ENCODE measurements at regions of chr1 and their contacts with region 1.

Region 1: GRCh38 chr1:156461781-156462647 is 38.6 kb downstream of the MEF2D start:
- DNase-seq: no peak
- H3K4me3 ChIP-seq: no peak overlapping the region
- H3K27ac ChIP-seq: no peak overlapping the region
- H3K4me1 ChIP-seq: peaks cover 23 to 34% of the 10 kb centered on the region in 2 donors
- H3K27me3 ChIP-seq: no peaks in the 10 kb centered on the region
- CTCF ChIP-seq: no peak
- POLR2A ChIP-seq: no peak

Region 2: DNA sequence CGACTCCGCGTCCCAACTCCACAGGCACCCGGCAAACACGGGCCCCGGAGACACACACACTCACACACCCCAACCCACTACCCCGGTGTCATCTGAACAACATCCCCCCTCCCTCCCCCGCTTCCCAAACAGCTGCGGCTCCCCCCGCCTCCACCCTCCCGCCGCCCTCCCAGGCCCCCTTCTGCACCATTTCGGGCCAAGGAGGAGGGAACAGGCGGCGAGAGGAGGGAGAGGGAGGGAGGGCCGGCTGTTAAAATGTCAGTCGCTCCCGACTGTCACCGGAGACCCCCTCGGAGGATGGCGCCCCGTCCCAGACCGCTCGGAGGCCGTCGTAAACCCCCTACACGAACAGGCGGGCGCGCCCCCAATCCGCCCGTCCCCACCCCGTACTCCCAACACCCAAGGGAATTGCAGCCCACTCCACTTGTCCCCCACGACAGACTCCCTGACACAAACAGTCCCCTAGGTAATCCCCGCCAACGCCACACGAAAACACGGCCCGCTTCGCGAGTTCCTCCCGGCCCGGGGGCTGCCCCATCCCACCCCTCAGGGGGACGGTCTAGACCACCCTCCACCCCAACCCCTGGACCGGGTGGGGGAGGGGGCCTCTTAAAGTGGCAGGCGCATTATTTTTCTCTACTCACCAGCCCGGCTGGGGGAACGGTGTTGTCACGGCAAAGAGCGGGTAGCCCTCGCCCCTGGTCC is 38.0 kb after region 1 on chr1:
- intact Hi-C with region 1: loop called (anchors 5 kb)
- DNase-seq: peak; percentile 51 to 56
- H3K4me3 ChIP-seq: peak overlapping the region; percentile 97 to 99 (median 98)
- H3K27ac ChIP-seq: peak overlapping the region; percentile 99 to 100 (median 100)
- H3K4me1 ChIP-seq: peaks cover 67 to 70% of the 10 kb centered on the region in 2 donors
- H3K27me3 ChIP-seq: no peaks in the 10 kb centered on the region
- CTCF ChIP-seq: no peak
- POLR2A ChIP-seq: no peak

Region 3: DNA sequence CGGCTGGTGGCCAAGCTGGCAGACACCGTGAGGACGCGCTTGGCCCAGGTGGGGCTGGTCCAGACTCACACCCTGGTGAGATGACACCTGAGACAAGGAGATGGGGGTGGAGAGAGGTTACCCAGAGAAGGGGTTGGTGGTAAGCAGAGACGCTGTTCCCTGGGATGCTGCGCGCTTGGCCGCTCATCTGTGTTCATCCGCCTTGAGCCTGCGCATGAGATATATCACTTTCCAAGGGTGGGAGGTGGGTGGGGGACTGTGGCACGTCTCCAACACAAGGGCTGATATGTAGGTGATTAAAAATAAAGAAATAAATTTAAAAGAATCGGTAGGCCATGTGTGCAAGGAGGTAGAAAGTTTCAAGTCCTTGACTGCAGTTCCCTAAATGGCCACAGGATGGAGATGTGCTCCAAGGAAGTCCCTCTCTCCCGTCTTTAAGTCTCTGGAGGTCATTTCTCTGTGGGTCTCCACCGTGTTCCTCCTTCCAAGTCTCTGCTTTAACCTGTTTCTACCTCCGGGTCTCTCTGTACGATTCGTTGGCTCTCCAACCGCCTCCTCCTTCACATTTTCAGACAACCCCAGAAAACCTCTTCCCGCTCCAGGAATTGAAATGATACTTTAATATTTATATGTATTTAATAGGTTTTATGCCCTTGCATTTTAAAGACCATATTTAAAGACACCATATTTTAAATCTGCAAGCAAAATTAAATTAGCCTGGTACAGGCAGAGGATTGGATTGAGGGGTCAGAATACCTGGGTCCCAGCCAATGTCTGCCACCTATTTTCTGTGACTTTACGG is 122.0 kb after region 1 on chr1:
- intact Hi-C with region 1: no loop called
- DNase-seq: peak; percentile 78 to 79
- H3K4me3 ChIP-seq: no peak overlapping the region
- H3K27ac ChIP-seq: no peak overlapping the region
- H3K4me1 ChIP-seq: no peaks in the 10 kb centered on the region
- H3K27me3 ChIP-seq: no peaks in the 10 kb centered on the region
- CTCF ChIP-seq: peak; percentile 78 to 94 (median 87)
- POLR2A ChIP-seq: no peak